GM12878 (cell line): ENCODE measurements at regions of chr18 and their contacts with region 1.

Region 1: DNA sequence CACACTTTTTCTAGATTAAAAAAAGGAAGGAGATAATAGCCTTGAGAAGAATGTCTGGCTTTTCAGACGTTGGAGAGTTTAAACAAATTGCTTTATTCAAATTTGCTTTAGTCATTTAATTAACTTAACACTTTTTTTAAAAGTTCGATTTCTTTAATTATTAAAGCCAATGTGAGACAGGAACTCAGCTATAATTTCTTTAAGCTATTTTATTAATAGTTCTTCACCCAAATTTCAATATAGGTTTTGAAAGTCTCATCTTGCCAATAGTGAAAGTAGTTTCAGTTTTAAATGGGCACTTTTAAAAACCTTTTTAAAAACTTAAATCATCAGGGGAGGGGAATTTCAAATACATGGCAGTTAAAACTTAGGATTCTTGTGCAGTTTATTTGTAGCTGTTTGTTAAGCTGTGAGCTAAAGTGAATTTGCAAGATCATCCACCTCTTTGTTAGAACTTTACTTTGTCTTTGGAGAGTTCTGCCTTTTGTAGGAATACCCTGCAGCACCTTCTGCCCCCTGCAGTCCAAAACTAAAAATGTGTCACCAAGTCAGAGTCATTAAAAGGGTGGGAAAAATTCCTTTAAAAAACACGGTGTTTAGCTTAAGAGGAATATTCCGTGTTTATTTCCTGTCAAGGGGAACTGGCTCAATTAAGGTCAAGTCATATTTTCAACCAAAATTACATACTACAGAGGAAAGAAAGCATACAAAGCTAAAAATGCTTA is 4.6 kb downstream of the TGIF1 start:
- DNase-seq: peak; percentile 19
- ATAC-seq: no peak; the same call in 2 of the 3 replicates
- H3K4me3 ChIP-seq: peak overlapping the region; percentile 28; the same call in 1 of the 2 replicates
- H3K27ac ChIP-seq: peak overlapping the region; percentile 19; the same call in 1 of the 2 replicates
- H3K4me1 ChIP-seq: peaks cover 22% of the 10 kb centered on the region
- H3K27me3 ChIP-seq: peaks cover 2 to 16% of the 10 kb centered on the region in 2 experiments
- CTCF ChIP-seq: peak; percentile 59 to 68 (median 59)
- EP300 ChIP-seq: no peak
- POLR2A ChIP-seq: no peak
- RAD21 ChIP-seq: peak; percentile 69

Region 2: DNA sequence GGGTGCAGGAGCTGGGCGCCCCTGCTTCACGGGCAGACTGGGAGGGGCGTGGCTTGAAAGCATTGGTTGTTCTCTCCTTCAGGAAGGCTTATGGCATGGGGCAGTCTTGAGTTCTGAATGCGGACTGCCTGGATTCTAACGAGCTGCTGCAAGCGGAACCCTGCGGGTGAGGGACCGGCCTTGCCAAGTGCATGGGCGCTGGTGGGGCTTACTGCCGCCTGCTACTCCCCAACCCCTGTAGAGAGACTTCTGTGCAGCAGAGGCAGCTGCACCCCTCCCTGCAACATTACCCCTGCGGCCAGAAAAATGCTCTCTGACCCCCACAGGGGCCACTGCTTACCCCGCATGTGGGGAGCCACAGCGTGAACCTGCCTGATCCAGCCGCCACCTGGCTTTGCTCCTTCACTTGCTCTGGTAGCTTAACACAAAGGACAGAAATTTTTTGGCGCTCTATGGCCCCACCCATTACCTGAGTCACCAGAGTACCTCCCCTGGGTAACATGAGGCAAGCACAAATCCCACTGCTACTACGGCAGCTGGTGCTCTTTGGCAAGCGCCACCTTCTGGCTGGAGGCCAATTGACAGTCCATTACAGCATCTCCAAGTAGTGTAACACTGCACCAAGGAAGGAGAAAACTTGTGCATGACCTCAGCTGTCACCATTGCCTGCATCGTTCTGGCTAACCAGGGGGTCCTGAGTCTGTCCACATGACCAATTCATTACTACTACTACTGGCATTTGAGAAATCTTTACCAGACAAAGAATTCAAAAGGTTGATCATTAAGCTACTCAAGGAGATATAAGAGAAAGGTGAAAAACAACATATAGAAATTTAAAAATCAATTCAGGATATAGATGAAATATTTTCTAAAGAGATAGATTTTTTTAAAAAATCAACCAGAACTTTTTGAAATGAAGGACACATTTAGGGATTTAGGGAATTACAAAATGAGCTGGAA is 157.2 kb before region 1 on chr18:
- CTCF ChIA-PET with region 1: interaction called, 23 read pairs
- POLR2A ChIA-PET with region 1: no interaction called
- RAD21 ChIA-PET with region 1: interaction called, 3 read pairs
- SMC1A ChIA-PET with region 1: interaction called, 26 read pairs
- in situ Hi-C with region 1: no loop called
- intact Hi-C with region 1: no loop called
- DNase-seq: peak; percentile 69
- ATAC-seq: peak; percentile 99
- H3K4me3 ChIP-seq: peak overlapping the region; percentile 71
- H3K27ac ChIP-seq: peak overlapping the region; percentile 33
- H3K4me1 ChIP-seq: peaks cover 5% of the 10 kb centered on the region; the same call in 1 of the 2 replicates
- H3K27me3 ChIP-seq: no peaks in the 10 kb centered on the region; a peak in 1 of 4 replicates
- CTCF ChIP-seq: peak; percentile 74 to 92 (median 77)
- EP300 ChIP-seq: no peak
- POLR2A ChIP-seq: peak; percentile 90
- RAD21 ChIP-seq: peak; percentile 41

Region 3: DNA sequence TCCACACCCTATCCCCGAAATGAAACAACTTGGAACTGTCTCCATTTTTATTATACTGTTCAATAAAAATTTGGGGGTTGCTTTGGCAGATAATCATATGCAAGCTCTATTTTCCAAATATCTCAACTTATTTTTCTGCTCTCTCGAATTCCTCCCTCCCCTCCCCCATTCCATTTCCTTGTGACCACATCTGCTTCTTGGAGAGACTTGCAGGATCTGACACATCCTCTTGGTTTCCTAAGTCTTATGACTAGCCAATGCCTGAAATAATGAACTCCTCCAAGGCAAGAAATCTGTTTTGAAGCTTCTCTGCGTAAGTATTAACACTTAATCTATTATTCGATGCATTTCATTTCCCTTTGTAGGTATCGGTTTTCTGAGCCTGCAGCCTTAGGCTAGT is 11.5 kb after region 1 on chr18:
- CTCF ChIA-PET with region 1: interaction called, 16 read pairs
- POLR2A ChIA-PET with region 1: no interaction called
- RAD21 ChIA-PET with region 1: interaction called, 4 read pairs
- SMC1A ChIA-PET with region 1: interaction called, 27 read pairs
- in situ Hi-C with region 1: no loop called
- intact Hi-C with region 1: no loop called
- DNase-seq: no peak
- ATAC-seq: no peak
- H3K4me3 ChIP-seq: no peak overlapping the region
- H3K27ac ChIP-seq: no peak overlapping the region
- H3K4me1 ChIP-seq: no peaks in the 10 kb centered on the region
- H3K27me3 ChIP-seq: no peaks in the 10 kb centered on the region
- CTCF ChIP-seq: no peak
- EP300 ChIP-seq: no peak
- POLR2A ChIP-seq: no peak
- RAD21 ChIP-seq: no peak

Region 4: GRCh38 chr18:3525870-3526420 is 71.4 kb after region 1 on chr18:
- CTCF ChIA-PET with region 1: interaction called, 22 read pairs
- POLR2A ChIA-PET with region 1: interaction called, 9 read pairs
- RAD21 ChIA-PET with region 1: interaction called, 17 read pairs
- SMC1A ChIA-PET with region 1: interaction called, 54 read pairs
- in situ Hi-C with region 1: no loop called
- intact Hi-C with region 1: loop called (anchors 5 kb)
- DNase-seq: peak; percentile 65
- ATAC-seq: peak; percentile 83
- H3K4me3 ChIP-seq: peak overlapping the region; percentile 16
- H3K27ac ChIP-seq: no peak overlapping the region
- H3K4me1 ChIP-seq: peaks cover 12% of the 10 kb centered on the region
- H3K27me3 ChIP-seq: no peaks in the 10 kb centered on the region
- CTCF ChIP-seq: no peak
- EP300 ChIP-seq: peak; percentile 73 to 82; a peak in 2 of 4 replicates
- POLR2A ChIP-seq: no peak
- RAD21 ChIP-seq: 0 out of 2 replicates have a peak, but pooled peaks have one; percentile 3

Region 5: DNA sequence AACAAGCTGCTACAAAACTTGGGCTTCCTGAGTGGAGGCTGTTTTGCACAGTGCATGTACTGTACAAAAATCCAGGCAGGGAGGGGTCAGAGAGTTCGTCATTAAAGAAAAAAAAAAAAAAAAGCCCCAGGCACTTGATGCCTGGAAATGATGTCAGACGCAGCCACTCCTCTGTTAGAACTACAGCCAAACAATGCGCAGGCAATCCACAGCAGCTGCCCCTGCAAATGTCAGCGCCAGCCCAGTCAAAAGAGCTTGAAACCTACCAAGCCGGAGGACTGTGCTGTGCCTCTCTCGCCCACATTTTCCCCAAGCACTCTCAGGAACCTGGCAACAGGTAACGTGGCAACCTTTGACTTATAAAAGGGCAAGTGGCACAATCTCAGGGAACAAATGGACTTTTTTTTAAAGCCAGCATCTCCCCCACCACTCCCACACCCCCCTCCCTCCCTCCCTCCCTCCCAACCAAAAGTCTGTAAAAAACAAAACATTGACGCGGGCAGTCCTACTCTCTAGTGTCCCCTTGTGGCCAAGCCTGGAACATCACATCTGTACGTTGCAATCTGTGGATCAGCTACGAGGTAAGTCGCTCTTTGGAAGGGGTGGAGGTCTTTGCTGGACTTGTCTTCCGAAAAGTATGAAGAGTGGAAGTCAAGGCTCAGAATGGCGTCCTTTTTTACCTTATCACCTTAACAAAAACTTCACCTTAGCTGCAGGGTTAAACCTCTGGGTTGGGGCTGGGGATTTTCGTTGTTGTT is 139.6 kb after region 1 on chr18:
- CTCF ChIA-PET with region 1: interaction called, 60 read pairs
- POLR2A ChIA-PET with region 1: interaction called, 3 read pairs
- RAD21 ChIA-PET with region 1: interaction called, 24 read pairs
- SMC1A ChIA-PET with region 1: interaction called, 43 read pairs
- in situ Hi-C with region 1: loop called (anchors 5 kb)
- intact Hi-C with region 1: loop called (anchors 1 kb)
- DNase-seq: peak; percentile 81
- ATAC-seq: peak; percentile 72
- H3K4me3 ChIP-seq: peak overlapping the region; percentile 43; the same call in 1 of the 2 replicates
- H3K27ac ChIP-seq: peak overlapping the region; percentile 90
- H3K4me1 ChIP-seq: peaks cover 37% of the 10 kb centered on the region
- H3K27me3 ChIP-seq: no peaks in the 10 kb centered on the region
- CTCF ChIP-seq: peak; percentile 82 to 95 (median 83)
- EP300 ChIP-seq: peak in 1 of 2 experiments; percentile 53; a peak in 2 of 4 replicates
- POLR2A ChIP-seq: peak; percentile 81
- RAD21 ChIP-seq: peak; percentile 79